Activated B cell treated with CpG ODN at 0.5 μM for 24 hours (primary cell): ENCODE measurements at regions of chr6 and their contacts with region 1.

Region 1: DNA sequence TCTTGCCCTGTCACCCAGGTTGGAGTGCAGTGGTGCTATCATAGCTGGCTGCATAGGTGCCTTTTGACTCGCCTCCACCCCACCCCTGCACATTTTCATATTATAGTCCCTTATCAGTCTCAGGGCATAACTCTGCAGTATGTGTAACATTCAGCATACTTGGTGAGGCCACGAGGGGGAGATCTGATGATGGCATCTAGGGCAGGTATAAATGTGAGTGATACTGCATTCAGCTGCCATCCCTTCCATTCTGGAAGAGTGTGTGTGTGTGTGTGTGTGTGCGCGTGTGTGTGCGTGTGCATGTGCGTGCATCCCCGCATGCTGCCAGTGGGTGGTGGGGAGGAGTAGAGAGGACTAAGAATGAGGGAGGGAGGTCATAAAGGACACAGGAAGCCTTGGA is 81.4 kb downstream of the JARID2 start:
- DNase-seq: no peak
- ATAC-seq: peak; percentile 74
- H3K4me3 Mint-ChIP-seq: peak overlapping the region; percentile 56
- H3K27ac Mint-ChIP-seq: peak overlapping the region; percentile 89
- H3K4me1 Mint-ChIP-seq: peaks cover 96% of the 10 kb centered on the region
- H3K27me3 Mint-ChIP-seq: no peaks in the 10 kb centered on the region
- CTCF ChIP-seq: no peak

Region 2: GRCh38 chr6:13814176-13814937 is 1512.9 kb before region 1 on chr6 and contains the start of gene MCUR1:
- CTCF ChIA-PET with region 1: no interaction called
- POLR2A ChIA-PET with region 1: no interaction called
- intact Hi-C with region 1: loop called (anchors 10 kb)
- DNase-seq: peak; percentile 81
- ATAC-seq: peak; percentile 83
- H3K4me3 Mint-ChIP-seq: peak within 1 kb of the TSS; percentile 91
- H3K27ac Mint-ChIP-seq: peak within 1 kb of the TSS; percentile 87
- H3K4me1 Mint-ChIP-seq: peaks cover 32% of the 10 kb centered on the region
- H3K27me3 Mint-ChIP-seq: no peaks in the 10 kb centered on the region
- CTCF ChIP-seq: no peak
- total RNA-seq, gene MCUR1: 13.6 and 14.1 TPM in 2 replicates

Region 3: GRCh38 chr6:14540276-14540675 is 787.0 kb before region 1 on chr6:
- CTCF ChIA-PET with region 1: no interaction called
- POLR2A ChIA-PET with region 1: no interaction called
- intact Hi-C with region 1: no loop called
- DNase-seq: no peak
- ATAC-seq: no peak
- H3K4me3 Mint-ChIP-seq: no peak overlapping the region
- H3K27ac Mint-ChIP-seq: no peak overlapping the region
- H3K4me1 Mint-ChIP-seq: peaks cover 34% of the 10 kb centered on the region
- H3K27me3 Mint-ChIP-seq: no peaks in the 10 kb centered on the region
- CTCF ChIP-seq: no peak

Region 4: GRCh38 chr6:15287670-15288375 is 39.4 kb before region 1 on chr6:
- CTCF ChIA-PET with region 1: no interaction called
- POLR2A ChIA-PET with region 1: interaction called, 6 read pairs
- intact Hi-C with region 1: loop called (anchors 2 kb)
- DNase-seq: peak; percentile 19
- ATAC-seq: peak; percentile 99
- H3K4me3 Mint-ChIP-seq: peak overlapping the region; percentile 72
- H3K27ac Mint-ChIP-seq: peak overlapping the region; percentile 91
- H3K4me1 Mint-ChIP-seq: peaks cover 61% of the 10 kb centered on the region
- H3K27me3 Mint-ChIP-seq: no peaks in the 10 kb centered on the region
- CTCF ChIP-seq: no peak

Region 5: DNA sequence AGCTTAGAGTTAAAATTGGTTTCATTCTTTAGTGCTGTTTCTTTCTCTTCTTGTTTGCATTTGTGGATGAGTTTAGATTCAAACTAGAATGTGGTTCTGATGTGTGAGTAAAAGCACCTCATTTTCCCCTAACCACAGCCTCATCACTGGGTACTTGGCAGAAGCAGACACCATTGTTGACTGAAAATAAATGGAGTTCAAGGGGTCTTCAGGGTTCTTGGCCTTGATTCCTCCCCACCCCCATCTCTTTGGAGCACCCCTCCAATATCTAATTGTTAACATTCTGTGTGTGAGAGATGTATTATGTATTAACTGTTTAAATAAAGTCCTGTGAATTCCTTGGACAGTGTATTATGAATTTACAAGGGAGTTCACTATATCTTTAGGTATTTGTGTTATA is 21.8 kb before region 1 on chr6:
- CTCF ChIA-PET with region 1: interaction called, 3 read pairs
- POLR2A ChIA-PET with region 1: interaction called, 15 read pairs
- intact Hi-C with region 1: no loop called
- DNase-seq: no peak
- ATAC-seq: peak; percentile 75
- H3K4me3 Mint-ChIP-seq: peak overlapping the region; percentile 62
- H3K27ac Mint-ChIP-seq: peak overlapping the region; percentile 91
- H3K4me1 Mint-ChIP-seq: peaks cover 82% of the 10 kb centered on the region
- H3K27me3 Mint-ChIP-seq: no peaks in the 10 kb centered on the region
- CTCF ChIP-seq: no peak

Region 6: GRCh38 chr6:15340775-15341174 is 13.5 kb after region 1 on chr6:
- CTCF ChIA-PET with region 1: no interaction called
- POLR2A ChIA-PET with region 1: interaction called, 7 read pairs
- intact Hi-C with region 1: loop called (anchors 1 kb)
- DNase-seq: no peak
- ATAC-seq: no peak
- H3K4me3 Mint-ChIP-seq: peak overlapping the region; percentile 6
- H3K27ac Mint-ChIP-seq: peak overlapping the region; percentile 43
- H3K4me1 Mint-ChIP-seq: peaks cover 87% of the 10 kb centered on the region
- H3K27me3 Mint-ChIP-seq: no peaks in the 10 kb centered on the region
- CTCF ChIP-seq: no peak

Region 7: GRCh38 chr6:15389765-15390723 is 62.8 kb after region 1 on chr6:
- CTCF ChIA-PET with region 1: interaction called, 5 read pairs
- POLR2A ChIA-PET with region 1: no interaction called
- intact Hi-C with region 1: loop called (anchors 2 kb)
- DNase-seq: no peak
- ATAC-seq: peak; percentile 69
- H3K4me3 Mint-ChIP-seq: peak overlapping the region; percentile 42
- H3K27ac Mint-ChIP-seq: peak overlapping the region; percentile 30
- H3K4me1 Mint-ChIP-seq: peaks cover 71% of the 10 kb centered on the region
- H3K27me3 Mint-ChIP-seq: no peaks in the 10 kb centered on the region
- CTCF ChIP-seq: no peak

Region 8: DNA sequence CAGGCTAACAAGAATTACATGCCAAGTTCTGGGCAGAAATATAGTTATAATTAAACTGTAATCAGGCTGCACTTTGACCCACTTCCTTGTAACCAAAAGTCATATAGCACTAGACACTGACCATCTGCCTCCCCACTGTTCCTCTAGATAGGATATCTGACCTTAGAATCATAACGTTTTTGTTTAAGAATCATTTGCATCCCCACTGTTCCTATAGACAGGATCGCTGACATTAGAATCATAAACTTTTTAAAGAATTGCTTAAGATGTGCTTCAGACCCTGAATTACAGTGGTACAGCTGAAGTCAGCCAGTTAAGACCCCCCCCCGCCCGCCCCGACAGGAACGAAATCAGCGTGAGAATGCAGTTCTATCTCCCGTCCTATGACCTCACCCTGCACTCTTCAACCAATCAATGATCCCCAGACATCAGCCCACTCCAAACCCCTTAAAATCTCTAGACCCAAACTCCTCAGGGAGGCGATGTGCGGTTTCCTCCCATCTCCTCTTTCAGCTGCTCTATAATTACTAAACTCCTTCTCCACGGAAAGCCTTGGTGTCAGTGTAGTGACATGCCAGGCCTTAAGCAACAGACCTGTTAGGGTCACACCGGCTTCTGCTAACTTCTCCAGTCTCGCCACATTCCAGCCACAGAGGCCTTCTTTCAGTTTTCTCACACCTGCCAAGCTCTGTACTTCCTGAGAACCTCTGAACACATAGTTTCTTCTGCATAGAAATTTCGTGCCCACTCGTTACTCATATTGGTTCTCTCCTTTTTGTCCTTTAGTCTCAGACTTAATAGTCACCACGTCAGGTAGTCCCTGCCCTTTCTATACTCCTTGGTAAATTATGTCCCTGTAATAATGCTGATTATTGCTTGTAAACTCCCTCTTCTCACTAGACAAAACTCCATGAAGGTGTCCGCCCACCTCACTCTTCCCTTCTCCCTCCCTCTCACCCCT is 242.0 kb after region 1 on chr6:
- CTCF ChIA-PET with region 1: no interaction called
- POLR2A ChIA-PET with region 1: no interaction called
- intact Hi-C with region 1: no loop called
- DNase-seq: no peak
- ATAC-seq: no peak
- H3K4me3 Mint-ChIP-seq: no peak overlapping the region
- H3K27ac Mint-ChIP-seq: no peak overlapping the region
- H3K4me1 Mint-ChIP-seq: peaks cover 20% of the 10 kb centered on the region
- H3K27me3 Mint-ChIP-seq: no peaks in the 10 kb centered on the region
- CTCF ChIP-seq: no peak